Activated CD4-positive, alpha-beta memory T cell treated with anti-CD3 and anti-CD28 coated beads, Interleukin-2, amount 10 ng/mL, durations not matched to agents 7 days and 5 days (primary cell): ENCODE measurements at regions of chr9 and their contacts with region 1.

Region 1: GRCh38 chr9:114681594-114682332 is at the start of gene TEX48:
- DNase-seq: peak; percentile 89
- H3K4me3 Mint-ChIP-seq: peak within 1 kb of the TSS; percentile 55
- H3K27ac Mint-ChIP-seq: peak within 1 kb of the TSS; percentile 84
- H3K4me1 Mint-ChIP-seq: peaks cover 57% of the 10 kb centered on the region
- H3K27me3 Mint-ChIP-seq: peaks cover 13% of the 10 kb centered on the region
- total RNA-seq, gene TEX48: 0.48 to 1.5 TPM

Region 2: DNA sequence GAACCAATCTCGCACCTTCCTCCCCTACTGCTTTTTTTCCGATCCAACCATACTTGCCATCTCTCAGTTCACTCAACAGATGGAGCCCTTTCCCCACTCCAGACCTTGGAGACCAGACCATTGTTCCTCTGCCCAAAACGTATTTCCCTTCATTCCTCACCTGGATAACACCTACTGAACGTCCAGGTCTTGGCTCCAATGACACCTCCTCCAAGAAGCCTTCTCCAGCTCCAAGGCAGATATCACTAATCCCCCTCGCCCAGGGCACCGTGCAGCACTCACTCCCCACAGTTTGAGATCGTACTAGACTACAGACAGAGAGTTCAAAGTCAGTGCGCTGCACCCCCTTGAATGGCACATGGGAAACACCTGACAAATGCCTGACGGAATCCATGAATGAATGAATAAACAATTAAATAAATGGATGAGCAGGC is 246.9 kb before region 1 on chr9:
- CTCF ChIA-PET with region 1: no interaction called
- POLR2A ChIA-PET with region 1: no interaction called
- DNase-seq: no peak
- H3K4me3 Mint-ChIP-seq: no peak overlapping the region
- H3K27ac Mint-ChIP-seq: no peak overlapping the region
- H3K4me1 Mint-ChIP-seq: peaks cover 8% of the 10 kb centered on the region
- H3K27me3 Mint-ChIP-seq: no peaks in the 10 kb centered on the region

Region 3: GRCh38 chr9:114641967-114642366 is 39.8 kb before region 1 on chr9:
- CTCF ChIA-PET with region 1: no interaction called
- POLR2A ChIA-PET with region 1: no interaction called
- DNase-seq: no peak
- H3K4me3 Mint-ChIP-seq: no peak overlapping the region
- H3K27ac Mint-ChIP-seq: no peak overlapping the region
- H3K4me1 Mint-ChIP-seq: no peaks in the 10 kb centered on the region
- H3K27me3 Mint-ChIP-seq: no peaks in the 10 kb centered on the region

Region 4: GRCh38 chr9:114671605-114672004 is 10.2 kb before region 1 on chr9:
- CTCF ChIA-PET with region 1: interaction called, 11 read pairs
- POLR2A ChIA-PET with region 1: no interaction called
- DNase-seq: no peak
- H3K4me3 Mint-ChIP-seq: no peak overlapping the region
- H3K27ac Mint-ChIP-seq: no peak overlapping the region
- H3K4me1 Mint-ChIP-seq: peaks cover 4% of the 10 kb centered on the region
- H3K27me3 Mint-ChIP-seq: peaks cover 9% of the 10 kb centered on the region

Region 5: GRCh38 chr9:114718801-114719221 is 37.0 kb after region 1 on chr9:
- CTCF ChIA-PET with region 1: interaction called, 30 read pairs
- POLR2A ChIA-PET with region 1: interaction called, 19 read pairs
- DNase-seq: peak; percentile 98
- H3K4me3 Mint-ChIP-seq: peak overlapping the region; percentile 3
- H3K27ac Mint-ChIP-seq: peak overlapping the region; percentile 93
- H3K4me1 Mint-ChIP-seq: peaks cover 68% of the 10 kb centered on the region
- H3K27me3 Mint-ChIP-seq: peaks cover 20% of the 10 kb centered on the region

Region 6: DNA sequence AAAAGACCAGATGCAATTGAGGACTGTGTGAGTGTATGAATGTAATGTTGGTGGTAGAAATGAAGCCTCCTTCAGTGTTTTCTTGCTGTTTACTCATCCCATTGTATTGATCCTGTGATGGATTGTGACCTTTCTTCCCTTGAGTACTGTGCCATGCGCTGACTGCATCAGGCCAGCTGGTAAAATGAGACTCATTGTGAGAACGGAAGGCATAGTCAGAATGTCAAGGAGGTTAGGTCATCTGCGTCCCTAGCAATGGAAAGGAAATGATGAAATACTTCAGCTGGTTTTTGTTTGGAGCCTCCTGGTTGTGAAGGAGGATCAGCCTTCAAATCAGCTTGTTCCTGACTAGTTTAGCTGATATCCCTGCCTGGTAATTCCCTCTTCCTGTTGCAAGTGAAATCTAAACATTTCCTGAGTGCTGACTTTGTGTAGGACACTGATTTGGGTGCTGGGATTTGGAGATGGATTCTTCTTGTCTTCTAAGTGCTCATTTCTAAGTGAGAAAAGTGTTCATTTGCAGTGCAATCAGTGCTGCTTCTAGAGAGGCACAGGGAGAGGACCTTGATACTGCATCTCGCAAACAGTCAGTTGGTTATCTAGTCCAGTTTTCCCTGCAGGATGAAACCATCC is 213.2 kb after region 1 on chr9:
- CTCF ChIA-PET with region 1: interaction called, 22 read pairs
- POLR2A ChIA-PET with region 1: interaction called, 8 read pairs
- DNase-seq: peak; percentile 66
- H3K4me3 Mint-ChIP-seq: no peak overlapping the region
- H3K27ac Mint-ChIP-seq: peak overlapping the region; percentile 74
- H3K4me1 Mint-ChIP-seq: peaks cover 43% of the 10 kb centered on the region
- H3K27me3 Mint-ChIP-seq: no peaks in the 10 kb centered on the region

Region 7: DNA sequence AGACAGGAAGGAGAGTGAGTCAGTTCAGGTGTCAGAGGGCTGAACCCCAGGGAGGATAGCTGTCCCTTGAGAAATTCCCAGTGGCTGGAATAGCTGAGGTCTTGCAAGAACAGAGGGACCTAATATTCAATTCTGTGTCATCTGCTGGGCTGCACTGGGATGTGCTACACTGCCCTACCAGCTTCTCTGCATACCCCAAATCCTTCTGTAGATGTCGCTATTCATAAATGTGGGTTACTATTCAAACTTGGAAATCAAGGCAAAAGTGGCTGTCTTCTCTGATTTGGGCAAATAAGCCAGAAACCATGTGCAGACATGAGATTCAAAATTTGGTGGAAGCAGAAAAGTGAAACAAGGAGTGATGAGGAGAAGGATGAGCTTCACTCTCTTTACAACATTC is 232.4 kb after region 1 on chr9:
- CTCF ChIA-PET with region 1: interaction called, 147 read pairs
- POLR2A ChIA-PET with region 1: interaction called, 12 read pairs
- DNase-seq: no peak
- H3K4me3 Mint-ChIP-seq: no peak overlapping the region
- H3K27ac Mint-ChIP-seq: peak overlapping the region; percentile 62
- H3K4me1 Mint-ChIP-seq: peaks cover 74% of the 10 kb centered on the region
- H3K27me3 Mint-ChIP-seq: no peaks in the 10 kb centered on the region

Region 8: GRCh38 chr9:115013998-115014397 is 332.2 kb after region 1 on chr9:
- CTCF ChIA-PET with region 1: interaction called, 173 read pairs
- POLR2A ChIA-PET with region 1: interaction called, 10 read pairs
- DNase-seq: peak; percentile 83
- H3K4me3 Mint-ChIP-seq: no peak overlapping the region
- H3K27ac Mint-ChIP-seq: peak overlapping the region; percentile 24
- H3K4me1 Mint-ChIP-seq: peaks cover 30% of the 10 kb centered on the region
- H3K27me3 Mint-ChIP-seq: peaks cover 17% of the 10 kb centered on the region